A673 (cell line): ENCODE measurements at regions of chr3 and their contacts with region 1.

Region 1: GRCh38 chr3:32685543-32686185 is 676 bp downstream of the CNOT10 start:
- DNase-seq: peak; percentile 43
- H3K4me3 ChIP-seq: peak overlapping the region; percentile 62
- H3K27ac ChIP-seq: peak overlapping the region; percentile 55
- H3K4me1 ChIP-seq: peaks cover 11% of the 10 kb centered on the region
- H3K27me3 ChIP-seq: no peaks in the 10 kb centered on the region
- CTCF ChIP-seq: no peak

Region 2: GRCh38 chr3:32077260-32078084 is 608.2 kb before region 1 on chr3:
- CTCF ChIA-PET with region 1: no interaction called
- POLR2A ChIA-PET with region 1: no interaction called
- intact Hi-C with region 1: no loop called
- DNase-seq: no peak
- H3K4me3 ChIP-seq: no peak overlapping the region
- H3K27ac ChIP-seq: no peak overlapping the region
- H3K4me1 ChIP-seq: no peaks in the 10 kb centered on the region
- H3K27me3 ChIP-seq: no peaks in the 10 kb centered on the region
- CTCF ChIP-seq: no peak

Region 3: GRCh38 chr3:32703491-32703972 is 17.9 kb after region 1 on chr3:
- CTCF ChIA-PET with region 1: no interaction called
- POLR2A ChIA-PET with region 1: no interaction called
- intact Hi-C with region 1: loop called (anchors 2 kb)
- DNase-seq: no peak
- H3K4me3 ChIP-seq: no peak overlapping the region
- H3K27ac ChIP-seq: no peak overlapping the region
- H3K4me1 ChIP-seq: peaks cover 9% of the 10 kb centered on the region
- H3K27me3 ChIP-seq: no peaks in the 10 kb centered on the region
- CTCF ChIP-seq: no peak